Psoas muscle (tissue), 8 donors: ENCODE measurements at regions of chr2 and their contacts with region 1.

Region 1: GRCh38 chr2:197310271-197310985 is at the start of gene ANKRD44:
- DNase-seq: peak; percentile 89 to 96
- ATAC-seq: peak; percentile 91 to 98 (median 96)
- H3K4me3 ChIP-seq: peak within 1 kb of the TSS; percentile 68
- H3K27ac ChIP-seq: peak within 1 kb of the TSS; percentile 74
- H3K4me1 ChIP-seq: peaks cover 23% of the 10 kb centered on the region
- H3K27me3 ChIP-seq: no peaks in the 10 kb centered on the region
- CTCF ChIP-seq: peak; percentile 58
- total RNA-seq, gene ANKRD44: 1.7 to 9.3 (median 8.5) TPM

Region 2: GRCh38 chr2:197011799-197012641 is 298.4 kb before region 1 on chr2:
- intact Hi-C with region 1: loop called in 1 of 2 experiments (anchors 10 kb)
- DNase-seq: no peak
- ATAC-seq: peak; percentile 49 to 78 (median 68)
- H3K4me3 ChIP-seq: no peak overlapping the region
- H3K27ac ChIP-seq: no peak overlapping the region
- H3K4me1 ChIP-seq: no peaks in the 10 kb centered on the region
- H3K27me3 ChIP-seq: no peaks in the 10 kb centered on the region
- CTCF ChIP-seq: peak; percentile 83

Region 3: GRCh38 chr2:197113275-197113711 is 197.1 kb before region 1 on chr2:
- intact Hi-C with region 1: loop called (anchors 5 kb)
- DNase-seq: no peak
- ATAC-seq: peak in 3 of 4 donors; percentile 36 to 74 (median 59)
- H3K4me3 ChIP-seq: no peak overlapping the region
- H3K27ac ChIP-seq: no peak overlapping the region
- H3K4me1 ChIP-seq: no peaks in the 10 kb centered on the region
- H3K27me3 ChIP-seq: no peaks in the 10 kb centered on the region
- CTCF ChIP-seq: peak; percentile 72

Region 4: DNA sequence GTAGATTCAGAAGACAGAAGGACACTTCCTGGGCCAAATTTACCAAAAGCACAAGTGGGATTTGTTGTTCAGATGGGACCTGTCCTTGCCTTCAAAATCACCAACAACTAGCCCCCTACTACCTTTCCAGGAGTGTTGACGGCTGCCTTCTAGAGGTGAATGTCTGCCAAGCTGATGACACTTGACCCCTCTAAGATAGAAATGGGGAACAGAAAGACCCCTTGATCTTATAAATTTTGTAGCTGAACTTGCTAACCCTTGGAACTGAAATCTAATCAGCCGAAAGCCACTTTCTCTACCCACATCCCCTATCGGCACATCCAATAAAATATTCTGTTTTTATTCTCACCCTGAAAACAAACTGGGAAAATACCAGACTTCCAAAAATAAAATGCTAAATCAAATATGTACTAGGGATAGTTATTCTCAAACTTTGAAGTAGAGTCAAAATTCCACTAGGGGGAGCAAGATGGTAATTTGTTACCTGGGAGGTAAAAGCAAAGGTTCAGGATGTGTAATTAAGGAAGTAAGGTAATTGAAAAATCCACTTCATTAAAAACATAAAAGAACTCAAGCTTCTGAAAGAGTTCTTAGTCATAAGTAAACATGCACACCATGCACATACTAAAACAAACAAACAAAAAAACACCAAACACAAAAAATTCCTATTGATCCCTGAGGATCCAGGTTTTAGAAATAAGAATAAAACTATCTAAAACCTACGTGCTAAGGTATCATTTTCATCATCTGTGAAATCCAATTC is 119.1 kb before region 1 on chr2:
- intact Hi-C with region 1: loop called (anchors 2 kb)
- DNase-seq: no peak
- ATAC-seq: peak in 1 of 4 donors; percentile 67
- H3K4me3 ChIP-seq: no peak overlapping the region
- H3K27ac ChIP-seq: no peak overlapping the region
- H3K4me1 ChIP-seq: peaks cover 7% of the 10 kb centered on the region
- H3K27me3 ChIP-seq: no peaks in the 10 kb centered on the region
- CTCF ChIP-seq: peak; percentile 77

Region 5: GRCh38 chr2:197239434-197239833 is 71.0 kb before region 1 on chr2:
- intact Hi-C with region 1: no loop called
- DNase-seq: no peak
- ATAC-seq: peak in 1 of 4 donors; percentile 5
- H3K4me3 ChIP-seq: no peak overlapping the region
- H3K27ac ChIP-seq: no peak overlapping the region
- H3K4me1 ChIP-seq: no peaks in the 10 kb centered on the region
- H3K27me3 ChIP-seq: no peaks in the 10 kb centered on the region
- CTCF ChIP-seq: no peak

Region 6: DNA sequence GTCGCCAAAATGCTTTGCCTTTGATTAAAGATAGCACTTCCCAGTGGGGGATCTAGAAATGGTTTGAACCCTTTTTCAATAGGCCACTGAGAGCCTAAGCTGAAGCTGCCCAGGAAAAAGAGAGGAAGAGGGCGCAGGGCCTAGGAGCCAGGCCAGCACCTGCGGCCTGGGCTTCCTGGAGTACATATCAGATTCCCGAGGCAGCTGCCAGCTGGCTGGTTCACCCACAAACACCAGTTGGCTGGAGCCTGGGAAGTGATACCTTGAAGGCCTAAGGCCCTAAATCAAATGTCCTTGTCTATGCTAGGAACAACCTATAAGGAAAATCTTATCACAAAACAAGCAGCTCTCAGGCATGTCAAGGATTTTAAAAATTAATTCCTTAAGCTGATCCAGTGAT is 36.9 kb before region 1 on chr2:
- intact Hi-C with region 1: loop called in 1 of 2 experiments (anchors 5 kb)
- DNase-seq: peak; percentile 72 to 90
- ATAC-seq: peak; percentile 99 to 100 (median 100)
- H3K4me3 ChIP-seq: no peak overlapping the region
- H3K27ac ChIP-seq: peak overlapping the region; percentile 37
- H3K4me1 ChIP-seq: peaks cover 5% of the 10 kb centered on the region
- H3K27me3 ChIP-seq: no peaks in the 10 kb centered on the region
- CTCF ChIP-seq: no peak

Region 7: DNA sequence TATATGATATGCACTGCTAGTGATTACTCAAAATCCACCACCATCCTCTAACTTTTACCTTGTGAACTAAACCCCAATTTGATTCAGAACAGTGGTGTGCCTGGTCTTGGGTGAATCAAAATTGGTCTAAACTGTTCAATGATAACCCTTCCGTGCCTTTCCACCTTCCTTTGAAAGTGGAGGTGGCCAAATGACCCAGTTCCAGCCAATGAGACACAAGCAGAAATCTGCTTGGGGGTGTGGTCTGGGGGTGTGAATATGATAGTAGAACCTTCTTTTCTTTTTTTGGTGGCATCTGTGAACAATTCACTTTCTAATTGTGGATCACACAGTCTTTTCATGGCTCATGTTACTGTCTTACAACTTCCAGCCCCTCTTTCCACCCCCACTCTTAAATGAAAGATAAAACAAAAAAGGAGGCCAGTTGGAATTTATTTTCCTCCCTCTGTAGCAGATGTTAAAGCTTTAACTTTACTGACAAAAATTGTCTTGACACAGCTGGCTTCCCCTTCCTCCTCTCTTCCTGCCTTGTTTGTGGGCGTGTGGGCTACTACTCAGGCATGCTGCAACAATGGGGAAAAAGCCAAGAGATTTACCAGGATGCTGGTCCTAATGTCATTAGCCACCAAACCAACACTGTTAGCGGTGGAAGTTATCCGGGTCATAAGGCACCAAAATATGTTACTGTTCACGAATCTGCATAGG is 59.0 kb after region 1 on chr2:
- intact Hi-C with region 1: loop called in 1 of 2 experiments (anchors 2 kb)
- DNase-seq: no peak
- ATAC-seq: peak in 3 of 4 donors; percentile 9 to 25 (median 23)
- H3K4me3 ChIP-seq: no peak overlapping the region
- H3K27ac ChIP-seq: peak overlapping the region; percentile 78
- H3K4me1 ChIP-seq: peaks cover 15% of the 10 kb centered on the region
- H3K27me3 ChIP-seq: no peaks in the 10 kb centered on the region
- CTCF ChIP-seq: no peak

Region 8: DNA sequence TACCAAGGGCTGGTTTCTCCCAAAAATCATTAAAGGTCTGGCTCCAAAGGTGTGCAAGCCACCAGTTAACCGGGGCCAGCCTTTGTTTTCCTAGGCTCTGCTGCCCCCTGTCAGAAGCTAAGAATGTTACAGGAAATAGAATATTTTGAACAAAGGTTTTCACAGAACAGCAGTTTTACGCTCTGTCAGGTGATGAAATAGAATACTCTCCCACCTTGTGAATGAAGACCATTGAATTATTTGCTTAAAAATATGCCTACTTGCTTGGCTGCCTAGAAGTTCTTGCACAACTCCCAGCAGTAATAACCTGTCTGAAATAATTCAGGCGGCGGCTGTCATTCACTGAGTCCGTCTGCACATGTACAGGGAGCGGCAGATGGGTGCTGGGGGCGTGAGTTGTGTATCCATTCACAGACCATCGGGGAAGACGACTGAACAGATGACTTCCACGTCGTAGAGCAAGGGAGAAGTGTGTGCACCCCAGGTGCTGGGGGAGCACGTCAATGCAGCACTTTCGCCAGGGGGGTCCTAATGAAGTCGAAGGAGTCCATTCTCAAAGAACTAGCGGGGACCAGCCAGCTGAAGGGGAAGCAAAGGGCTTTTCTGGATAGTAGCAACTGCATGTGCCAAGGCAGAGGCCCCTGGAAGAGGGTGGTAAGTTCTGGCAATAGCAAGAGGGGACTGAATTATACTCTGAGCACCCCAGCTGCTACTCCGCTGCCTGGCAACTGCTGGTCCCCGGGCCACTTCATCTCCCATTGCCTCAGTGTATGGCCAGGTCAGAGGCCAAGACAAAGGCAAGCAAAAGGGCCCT is 68.3 kb after region 1 on chr2:
- intact Hi-C with region 1: loop called in 1 of 2 experiments (anchors 2 kb)
- DNase-seq: peak in 1 of 2 donors; percentile 51
- ATAC-seq: peak; percentile 69 to 93 (median 78)
- H3K4me3 ChIP-seq: no peak overlapping the region
- H3K27ac ChIP-seq: no peak overlapping the region
- H3K4me1 ChIP-seq: no peaks in the 10 kb centered on the region
- H3K27me3 ChIP-seq: no peaks in the 10 kb centered on the region
- CTCF ChIP-seq: peak; percentile 78